Dorsolateral prefrontal cortex (tissue), 120 donors: ENCODE measurements at regions of chr20 and their contacts with region 1.

Region 1: DNA sequence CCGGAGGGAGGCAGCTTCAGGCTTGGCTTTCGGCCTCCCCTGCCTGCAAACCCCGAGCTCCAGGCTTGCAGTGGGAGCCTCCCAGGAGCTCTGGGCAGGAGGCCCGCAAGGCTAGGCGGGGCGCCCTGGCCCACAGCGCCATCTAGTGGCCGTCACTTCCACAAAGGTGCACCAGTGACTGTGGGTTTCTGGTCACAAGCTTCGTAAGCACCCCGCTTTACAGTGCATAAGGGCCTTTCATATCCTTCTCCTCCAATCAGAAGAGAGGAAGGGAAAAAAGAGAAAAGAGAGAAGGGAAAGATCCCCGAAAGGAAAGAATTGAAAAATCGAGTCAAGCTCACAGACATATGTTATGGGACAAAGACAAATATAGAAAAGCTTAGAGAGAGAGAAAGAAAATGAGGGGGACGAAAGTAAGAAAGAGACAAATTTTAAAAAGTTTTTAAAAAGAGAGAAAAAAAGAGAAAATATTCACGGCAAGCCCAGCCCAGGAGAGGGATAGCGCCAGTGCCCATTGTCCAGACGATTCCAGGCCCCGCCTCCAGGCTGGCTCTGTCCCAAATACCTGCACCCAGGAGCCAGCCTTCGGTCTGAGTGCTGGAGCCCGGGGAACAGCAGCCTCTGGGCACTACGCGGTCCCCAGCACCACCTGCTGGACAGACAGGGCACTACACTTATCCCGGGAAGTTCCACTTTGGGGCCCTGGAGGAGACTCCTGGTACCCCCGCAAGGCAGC is 207.1 kb downstream of the PREX1 start:
- DNase-seq: peak; percentile 76 to 90 (median 86)
- H3K4me3 ChIP-seq: peak overlapping the region in 37 of 59 donors; percentile 1 to 50 (median 31)
- H3K27ac ChIP-seq: peak overlapping the region in 15 of 59 donors; percentile 2 to 54 (median 27)
- H3K27me3 ChIP-seq: no peaks in the 10 kb centered on the region
- CTCF ChIP-seq: peak; percentile 52 to 97 (median 80)

Region 2: GRCh38 chr20:47663333-47664067 is 957.2 kb before region 1 on chr20:
- intact Hi-C with region 1: loop called (anchors 1 to 5 kb)
- DNase-seq: peak in 9 of 10 donors; percentile 68 to 88 (median 80)
- H3K4me3 ChIP-seq: no peak overlapping the region
- H3K27ac ChIP-seq: peak overlapping the region in 1 of 59 donors; percentile 26
- H3K27me3 ChIP-seq: no peaks in the 10 kb centered on the region
- CTCF ChIP-seq: peak; percentile 70 to 99 (median 96)

Region 3: DNA sequence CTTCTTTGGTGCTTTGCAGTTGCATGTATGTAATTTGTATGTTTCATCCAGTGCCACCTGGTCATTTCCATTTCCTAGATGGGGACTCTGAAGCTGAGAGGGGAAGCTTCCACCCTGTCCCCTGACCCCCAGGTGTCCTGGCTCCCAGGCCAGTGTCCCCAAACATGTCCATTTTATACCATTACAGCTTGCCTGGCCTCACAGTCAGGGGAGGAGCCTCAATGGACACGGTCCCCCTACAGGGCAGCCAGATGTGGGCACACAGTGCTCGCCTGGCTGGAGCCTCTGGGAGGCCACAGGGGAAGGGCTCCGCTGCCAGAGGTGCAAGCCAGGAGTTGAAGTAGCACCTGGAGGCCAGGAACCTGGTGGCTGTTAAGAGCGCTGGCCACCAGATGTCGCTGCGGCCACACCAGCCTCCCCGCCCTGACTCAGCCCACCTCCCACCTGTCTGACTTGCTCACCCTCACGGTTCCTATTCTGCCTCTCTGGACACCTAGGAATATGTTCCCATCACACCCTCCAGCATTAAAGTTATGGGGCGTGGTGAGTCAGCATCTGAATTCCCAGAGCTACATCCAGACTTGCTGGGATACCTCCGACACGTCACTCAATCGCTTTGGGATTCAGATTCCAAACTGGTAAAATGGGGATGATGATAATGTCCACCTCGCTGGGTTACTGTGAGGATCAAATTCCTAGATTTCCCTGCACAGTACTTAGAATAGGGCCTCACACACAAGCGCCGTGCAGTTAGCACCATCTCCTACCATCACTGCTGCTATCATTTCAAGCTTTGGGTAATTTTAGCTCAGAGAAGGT is 942.8 kb before region 1 on chr20:
- intact Hi-C with region 1: loop called (anchors 5 kb)
- DNase-seq: peak in 4 of 10 donors; percentile 25 to 65 (median 44)
- H3K4me3 ChIP-seq: no peak overlapping the region
- H3K27ac ChIP-seq: no peak overlapping the region
- H3K27me3 ChIP-seq: no peaks in the 10 kb centered on the region
- CTCF ChIP-seq: peak; percentile 40 to 85 (median 70)

Region 4: GRCh38 chr20:47725248-47725973 is 895.3 kb before region 1 on chr20:
- intact Hi-C with region 1: loop called (anchors 2 to 5 kb)
- DNase-seq: peak; percentile 15 to 74 (median 66)
- H3K4me3 ChIP-seq: no peak overlapping the region
- H3K27ac ChIP-seq: no peak overlapping the region
- H3K27me3 ChIP-seq: no peaks in the 10 kb centered on the region
- CTCF ChIP-seq: peak; percentile 81 to 97 (median 92)

Region 5: GRCh38 chr20:47785854-47786764 is 834.6 kb before region 1 on chr20:
- intact Hi-C with region 1: loop called (anchors 1 kb)
- DNase-seq: peak; percentile 27 to 79 (median 62)
- H3K4me3 ChIP-seq: peak overlapping the region; percentile 36 to 73 (median 56)
- H3K27ac ChIP-seq: peak overlapping the region in 46 of 59 donors; percentile 4 to 81 (median 59)
- H3K27me3 ChIP-seq: peaks cover 0 to 37% (median 11%) of the 10 kb centered on the region in 45 donors
- CTCF ChIP-seq: peak; percentile 48 to 87 (median 72)

Region 6: GRCh38 chr20:48295445-48295963 is 325.2 kb before region 1 on chr20:
- intact Hi-C with region 1: loop called in 1 of 2 experiments (anchors 10 kb)
- DNase-seq: no peak
- H3K4me3 ChIP-seq: peak overlapping the region in 1 of 59 donors; percentile 26
- H3K27ac ChIP-seq: peak overlapping the region in 18 of 59 donors; percentile 5 to 65 (median 34)
- H3K27me3 ChIP-seq: no peaks in the 10 kb centered on the region
- CTCF ChIP-seq: peak in 27 of 56 donors; percentile 11 to 41 (median 25)